ENCODE measurements at regions of chr4 and their contacts with region 1.

Region 1: GRCh38 chr4:94595879-94596483 is 144.2 kb downstream of the PDLIM5 start:
- DNase-seq: no peak
- H3K4me3 Mint-ChIP-seq: no peak overlapping the region
- H3K27ac Mint-ChIP-seq: no peak overlapping the region
- H3K4me1 Mint-ChIP-seq: peaks cover 7% of the 10 kb centered on the region
- H3K27me3 Mint-ChIP-seq: no peaks in the 10 kb centered on the region
- CTCF ChIP-seq: peak; percentile 15

Region 2: DNA sequence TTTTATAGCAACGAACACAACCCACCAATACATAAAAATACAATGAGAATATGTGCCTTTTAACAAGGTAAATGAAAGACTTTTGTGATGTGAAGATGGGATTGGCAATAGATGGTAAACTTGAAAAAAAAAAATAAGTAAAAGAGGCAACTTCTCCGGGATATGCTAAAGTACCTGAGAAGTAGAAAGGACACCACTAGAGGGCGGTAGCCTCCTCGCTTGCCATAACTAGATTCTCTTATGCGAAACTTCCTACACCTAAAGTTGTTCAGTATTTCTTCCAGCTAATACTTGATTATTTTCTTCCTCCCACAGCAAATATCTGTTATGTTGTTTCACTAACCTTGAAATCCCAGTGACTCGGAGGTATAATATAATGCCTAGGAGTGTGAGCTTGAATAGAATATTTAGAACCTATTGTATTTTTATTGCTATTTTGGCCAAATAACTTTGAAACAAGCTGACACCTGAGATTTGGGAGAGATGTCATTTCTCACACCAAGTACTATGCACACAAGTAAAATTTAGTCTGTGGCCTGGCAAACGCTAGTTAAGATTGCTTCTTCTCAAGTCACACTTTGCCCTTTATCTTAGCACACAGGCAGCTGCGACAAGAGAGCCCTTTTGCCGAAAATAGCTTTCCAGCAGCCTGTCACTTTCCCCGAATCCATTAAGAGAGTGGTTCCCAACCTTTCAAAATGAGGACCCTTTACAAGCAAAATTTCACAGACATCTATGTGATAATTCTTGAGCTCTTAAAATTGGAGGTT is 189.1 kb before region 1 on chr4:
- CTCF ChIA-PET with region 1: interaction called, 3 read pairs
- intact Hi-C with region 1: loop called (anchors 1 kb)
- DNase-seq: peak; percentile 68
- H3K4me3 Mint-ChIP-seq: no peak overlapping the region
- H3K27ac Mint-ChIP-seq: no peak overlapping the region
- H3K4me1 Mint-ChIP-seq: peaks cover 10% of the 10 kb centered on the region
- H3K27me3 Mint-ChIP-seq: no peaks in the 10 kb centered on the region
- CTCF ChIP-seq: no peak

Region 3: GRCh38 chr4:94457692-94458106 is 138.3 kb before region 1 on chr4:
- CTCF ChIA-PET with region 1: no interaction called
- intact Hi-C with region 1: loop called (anchors 2 kb)
- DNase-seq: no peak
- H3K4me3 Mint-ChIP-seq: peak overlapping the region; percentile 42
- H3K27ac Mint-ChIP-seq: no peak overlapping the region
- H3K4me1 Mint-ChIP-seq: peaks cover 40% of the 10 kb centered on the region
- H3K27me3 Mint-ChIP-seq: no peaks in the 10 kb centered on the region
- CTCF ChIP-seq: no peak

Region 4: DNA sequence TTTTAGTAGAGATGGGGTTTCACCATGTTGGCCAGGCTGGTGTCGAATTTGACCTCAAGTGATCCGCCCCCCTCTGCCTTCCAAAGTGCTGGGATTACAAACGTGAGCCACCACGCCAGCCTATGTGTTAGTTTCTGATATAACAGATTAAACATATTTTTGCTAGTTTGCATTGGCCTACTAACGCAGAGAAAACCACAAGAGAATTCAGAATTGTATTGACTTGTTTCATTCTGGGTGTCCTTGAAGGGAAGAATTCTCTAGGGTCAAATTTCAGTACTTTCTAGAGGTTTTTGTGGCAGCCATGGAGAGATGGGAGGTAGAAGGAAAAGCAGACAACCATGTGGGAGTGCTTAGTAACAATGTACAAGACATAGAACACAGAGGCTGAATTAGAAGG is 115.7 kb after region 1 on chr4:
- CTCF ChIA-PET with region 1: no interaction called
- intact Hi-C with region 1: no loop called
- DNase-seq: no peak
- H3K4me3 Mint-ChIP-seq: no peak overlapping the region
- H3K27ac Mint-ChIP-seq: no peak overlapping the region
- H3K4me1 Mint-ChIP-seq: no peaks in the 10 kb centered on the region
- H3K27me3 Mint-ChIP-seq: no peaks in the 10 kb centered on the region
- CTCF ChIP-seq: no peak

Measured in Calu3 (cell line).